Activated CD4-positive, alpha-beta T cell treated with anti-CD3 and anti-CD28 coated beads, Interleukin-2, amount 10 ng/mL, durations not matched to agents 24 days and 14 days (primary cell): ENCODE measurements at regions of chr12 and their contacts with region 1.

Region 1: GRCh38 chr12:47819896-47820630 is at the start of gene HDAC7:
- DNase-seq: peak; percentile 89
- H3K4me3 Mint-ChIP-seq: peak within 1 kb of the TSS; percentile 88
- H3K27ac Mint-ChIP-seq: peak within 1 kb of the TSS; percentile 99
- H3K4me1 Mint-ChIP-seq: peaks cover 64% of the 10 kb centered on the region
- H3K27me3 Mint-ChIP-seq: no peaks in the 10 kb centered on the region
- total RNA-seq, gene HDAC7: 405 and 419 TPM in 2 replicates

Region 2: DNA sequence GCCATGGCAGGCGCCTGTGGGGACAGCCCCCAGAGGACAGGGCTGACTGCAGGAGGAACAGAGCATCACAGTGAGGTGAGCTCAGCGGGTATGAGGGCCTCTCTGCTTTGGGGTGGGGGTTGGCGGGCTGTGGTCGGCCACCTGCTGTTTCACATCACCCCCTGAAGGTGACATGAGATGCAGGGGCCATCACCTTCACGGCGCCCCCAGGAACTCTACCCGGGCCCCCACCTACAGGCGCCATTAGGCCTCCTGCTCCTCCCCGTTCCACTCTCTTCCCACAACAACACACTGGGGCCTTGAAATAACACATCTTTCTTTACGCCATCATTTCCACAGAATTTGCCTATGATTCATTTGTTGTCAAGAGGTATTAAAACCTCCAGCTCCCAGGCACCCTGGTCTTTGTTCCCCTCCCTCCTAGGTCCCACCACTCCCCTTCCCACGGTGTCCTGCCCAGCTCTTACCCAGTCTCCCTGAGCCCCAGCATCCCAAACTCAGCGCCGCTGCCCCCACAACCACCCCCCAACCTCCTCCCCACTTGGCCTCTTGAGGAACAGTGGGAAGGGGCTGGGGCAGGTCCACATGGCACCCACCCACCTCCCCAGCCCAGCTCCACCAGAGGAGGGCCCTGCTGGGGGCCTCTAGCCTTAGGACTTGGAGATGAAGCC is 12.3 kb after region 1 on chr12:
- intact Hi-C with region 1: loop called (anchors 1 kb)
- DNase-seq: peak; percentile 80
- H3K4me3 Mint-ChIP-seq: peak overlapping the region; percentile 79
- H3K27ac Mint-ChIP-seq: peak overlapping the region; percentile 99
- H3K4me1 Mint-ChIP-seq: peaks cover 86% of the 10 kb centered on the region
- H3K27me3 Mint-ChIP-seq: no peaks in the 10 kb centered on the region